GM12878 (cell line): ENCODE measurements at regions of chr17 and their contacts with region 1.

Region 1: GRCh38 chr17:71472809-71473789 is 647.7 kb upstream of the SOX9 start:
- DNase-seq: no peak
- ATAC-seq: peak; percentile 89
- H3K4me3 ChIP-seq: no peak overlapping the region
- H3K27ac ChIP-seq: no peak overlapping the region
- H3K4me1 ChIP-seq: no peaks in the 10 kb centered on the region
- H3K27me3 ChIP-seq: no peaks in the 10 kb centered on the region
- CTCF ChIP-seq: peak; percentile 61 to 76 (median 70); a peak in 5 of 6 replicates
- EP300 ChIP-seq: no peak
- POLR2A ChIP-seq: no peak
- RAD21 ChIP-seq: peak; percentile 84

Region 2: GRCh38 chr17:71460943-71461342 is 12.2 kb before region 1 on chr17:
- CTCF ChIA-PET with region 1: interaction called, 18 read pairs
- POLR2A ChIA-PET with region 1: no interaction called
- RAD21 ChIA-PET with region 1: interaction called, 5 read pairs
- SMC1A ChIA-PET with region 1: interaction called, 6 read pairs
- in situ Hi-C with region 1: no loop called
- intact Hi-C with region 1: no loop called
- DNase-seq: no peak
- ATAC-seq: no peak
- H3K4me3 ChIP-seq: no peak overlapping the region
- H3K27ac ChIP-seq: no peak overlapping the region
- H3K4me1 ChIP-seq: no peaks in the 10 kb centered on the region
- H3K27me3 ChIP-seq: no peaks in the 10 kb centered on the region
- CTCF ChIP-seq: peak; percentile 7 to 26 (median 16); a peak in 3 of 6 replicates
- EP300 ChIP-seq: no peak
- POLR2A ChIP-seq: no peak
- RAD21 ChIP-seq: peak; percentile 13; the same call in 1 of the 2 replicates

Region 3: DNA sequence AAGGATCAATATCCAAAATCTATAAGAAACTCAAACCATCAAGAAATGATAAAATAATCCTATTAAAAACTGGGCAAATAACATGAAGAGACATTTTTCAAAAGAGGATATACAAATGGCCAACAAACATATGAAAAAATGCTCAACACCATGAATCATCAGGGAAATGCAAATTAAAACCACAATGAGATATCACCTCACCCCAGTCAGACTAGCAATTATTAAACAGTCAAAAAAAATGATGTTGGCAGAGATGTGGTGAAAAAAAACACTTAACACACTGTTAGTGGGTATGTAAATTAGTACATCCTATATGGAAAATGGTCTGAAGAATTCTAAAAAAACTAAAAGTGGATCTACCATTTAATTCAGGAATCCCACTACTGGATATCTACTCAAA is 268.7 kb after region 1 on chr17:
- CTCF ChIA-PET with region 1: no interaction called
- POLR2A ChIA-PET with region 1: no interaction called
- RAD21 ChIA-PET with region 1: no interaction called
- SMC1A ChIA-PET with region 1: interaction called, 4 read pairs
- in situ Hi-C with region 1: no loop called
- intact Hi-C with region 1: loop called (anchors 10 kb)
- DNase-seq: no peak
- ATAC-seq: no peak
- H3K4me3 ChIP-seq: no peak overlapping the region
- H3K27ac ChIP-seq: no peak overlapping the region
- H3K4me1 ChIP-seq: no peaks in the 10 kb centered on the region
- H3K27me3 ChIP-seq: no peaks in the 10 kb centered on the region
- CTCF ChIP-seq: no peak
- EP300 ChIP-seq: no peak
- POLR2A ChIP-seq: no peak
- RAD21 ChIP-seq: no peak

Region 4: GRCh38 chr17:72030067-72030899 is 557.2 kb after region 1 on chr17:
- CTCF ChIA-PET with region 1: interaction called, 5 read pairs
- POLR2A ChIA-PET with region 1: no interaction called
- RAD21 ChIA-PET with region 1: interaction called, 3 read pairs
- SMC1A ChIA-PET with region 1: no interaction called
- in situ Hi-C with region 1: no loop called
- intact Hi-C with region 1: loop called (anchors 10 kb)
- DNase-seq: peak; percentile 71
- ATAC-seq: peak; percentile 81
- H3K4me3 ChIP-seq: peak overlapping the region; percentile 80
- H3K27ac ChIP-seq: peak overlapping the region; percentile 91
- H3K4me1 ChIP-seq: peaks cover 45% of the 10 kb centered on the region
- H3K27me3 ChIP-seq: no peaks in the 10 kb centered on the region
- CTCF ChIP-seq: peak; percentile 30 to 48 (median 40); a peak in 4 of 6 replicates
- EP300 ChIP-seq: 0 out of 4 replicates have a peak, but pooled peaks of 1 of the 2 experiments have one; percentile 4
- POLR2A ChIP-seq: peak; percentile 65
- RAD21 ChIP-seq: peak; percentile 25; the same call in 1 of the 2 replicates